ENCODE measurements at regions of chr1 and their contacts with region 1.

Region 1: DNA sequence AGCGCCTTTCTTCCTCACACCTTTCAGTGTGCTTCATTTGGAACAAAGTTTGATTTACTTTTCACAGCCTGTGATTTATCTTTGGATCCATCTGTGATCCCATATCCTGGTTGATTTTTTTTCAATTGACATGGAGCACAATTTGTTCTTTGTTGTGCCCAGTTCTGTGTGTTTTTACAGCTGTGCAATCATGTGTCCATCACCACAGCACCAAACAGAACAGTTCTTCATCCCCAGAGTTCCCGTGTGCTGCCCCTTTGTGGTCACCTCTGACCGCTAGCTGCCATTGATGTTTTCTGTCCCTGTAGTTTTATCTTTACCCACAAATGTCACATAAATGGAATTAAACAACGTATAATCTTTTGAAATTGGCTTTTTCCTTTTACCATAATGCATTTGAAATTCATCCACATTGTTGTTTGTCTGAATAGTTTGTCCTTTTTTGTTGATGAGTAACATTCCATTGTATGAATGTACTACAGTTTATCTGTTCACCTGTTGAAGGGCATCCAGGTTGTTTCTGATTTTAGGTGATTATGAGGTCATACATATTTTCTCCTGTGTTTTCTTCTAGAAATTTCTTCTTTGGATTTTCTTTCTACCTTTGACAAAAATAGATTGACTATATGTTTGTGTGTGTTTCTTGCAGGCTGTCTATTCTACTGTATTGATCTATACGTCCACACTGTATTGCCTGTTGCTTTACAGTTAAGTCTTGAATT is 17.4 kb downstream of the MIGA1 start:
- DNase-seq: no peak
- CTCF ChIP-seq: no peak

Region 2: DNA sequence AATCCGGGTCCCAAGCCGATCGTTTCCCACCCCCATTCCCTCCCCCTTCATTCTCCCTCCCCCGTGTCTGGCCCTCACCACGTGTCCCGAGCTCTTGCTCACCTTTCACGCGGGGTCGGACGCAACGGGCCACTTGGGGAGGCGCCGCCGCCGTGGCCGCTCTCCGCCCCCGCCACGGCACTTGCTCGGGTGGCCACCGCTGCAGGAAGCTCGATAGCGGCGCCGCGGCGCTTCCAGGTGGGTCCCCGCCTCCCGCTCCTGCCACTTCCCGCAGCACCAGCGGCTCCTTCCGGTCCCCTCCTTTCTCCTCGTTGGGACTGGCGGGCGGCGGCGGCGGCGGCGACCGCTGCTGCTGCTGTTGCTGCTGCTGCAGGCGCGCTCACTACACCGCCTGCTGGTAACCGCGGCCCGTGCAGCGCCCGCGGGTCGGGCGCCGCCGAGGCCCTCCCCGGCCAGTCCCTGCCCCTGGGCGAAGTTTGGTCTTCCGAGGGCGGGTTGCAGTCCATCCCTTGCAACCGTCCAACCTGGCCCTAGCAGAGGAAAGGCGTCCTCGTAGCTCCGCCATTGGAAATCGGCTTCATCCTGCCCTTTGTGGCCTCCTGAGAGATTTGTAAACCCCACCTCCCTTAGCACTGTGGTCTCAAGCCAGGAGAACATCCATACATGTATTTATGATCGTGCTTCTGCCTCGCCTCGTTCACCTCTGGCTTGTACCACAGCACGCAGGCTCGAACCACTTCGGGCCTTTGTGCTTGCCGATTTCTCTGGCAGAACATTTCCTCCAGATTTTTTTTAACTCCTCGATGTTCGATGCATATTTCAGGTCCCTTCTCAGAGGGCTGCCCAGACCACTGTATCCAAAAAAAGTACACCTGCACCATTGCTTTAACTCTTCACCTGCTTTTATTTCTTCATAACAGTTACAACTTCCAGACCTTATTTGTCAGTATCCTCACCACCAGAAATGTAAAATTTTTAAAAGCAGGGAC is 113.4 kb before region 1 on chr1:
- CTCF ChIA-PET with region 1: no interaction called
- POLR2A ChIA-PET with region 1: no interaction called
- DNase-seq: peak; percentile 87
- CTCF ChIP-seq: peak; percentile 89

Region 3: GRCh38 chr1:77817368-77818209 is 20.7 kb after region 1 on chr1:
- CTCF ChIA-PET with region 1: interaction called, 11 read pairs
- POLR2A ChIA-PET with region 1: no interaction called
- DNase-seq: no peak
- CTCF ChIP-seq: no peak

Measured in GM10248 (cell line).